ENCODE measurements at regions of chr7 and their contacts with region 1.

Region 1: DNA sequence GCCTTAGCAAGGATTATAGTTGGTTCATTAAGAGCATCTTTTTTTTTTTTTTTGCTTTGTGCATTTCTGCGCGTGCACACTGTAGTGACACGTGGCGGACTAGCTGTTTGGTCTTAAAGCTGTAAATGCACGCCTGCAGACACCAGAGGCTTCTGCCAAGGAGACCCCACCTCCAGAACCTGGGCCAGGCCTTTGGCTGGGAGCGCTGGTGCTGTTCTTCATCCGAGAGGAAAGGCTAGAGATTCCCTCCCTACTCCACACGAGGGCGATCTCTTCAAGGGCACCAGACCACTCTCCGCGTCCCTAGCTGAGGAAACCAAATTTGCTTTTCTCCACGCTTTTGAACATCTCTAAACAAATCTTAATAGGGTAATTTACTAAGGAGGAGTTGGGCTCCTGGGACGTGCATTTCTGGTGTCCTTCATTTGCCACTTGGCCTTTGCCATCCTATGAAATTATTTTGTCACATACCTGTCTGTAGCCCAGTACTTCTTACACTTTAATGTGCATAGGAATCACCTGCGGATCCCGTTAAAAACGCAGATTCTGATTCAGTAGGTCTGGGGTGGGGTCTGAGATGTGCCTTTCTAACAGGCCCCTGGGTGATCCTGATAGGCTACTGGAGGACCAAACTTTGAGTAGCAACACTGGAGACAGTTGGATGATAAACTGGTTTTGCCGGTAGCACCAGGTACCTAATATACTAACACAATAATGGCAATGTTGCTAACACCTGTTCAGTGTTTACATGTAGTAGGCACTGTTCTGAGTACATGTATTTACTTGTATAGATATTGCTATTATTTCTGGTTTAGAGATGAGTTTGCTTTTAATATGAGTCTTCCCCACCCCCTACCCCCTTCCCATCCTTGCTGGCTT is 1.3 kb upstream of the SLC26A5 start:
- DNase-seq: peak; percentile 74
- H3K4me3 Mint-ChIP-seq: no peak overlapping the region
- H3K27ac Mint-ChIP-seq: no peak overlapping the region
- H3K4me1 Mint-ChIP-seq: peaks cover 4% of the 10 kb centered on the region
- H3K27me3 Mint-ChIP-seq: peaks cover 62% of the 10 kb centered on the region

Region 2: DNA sequence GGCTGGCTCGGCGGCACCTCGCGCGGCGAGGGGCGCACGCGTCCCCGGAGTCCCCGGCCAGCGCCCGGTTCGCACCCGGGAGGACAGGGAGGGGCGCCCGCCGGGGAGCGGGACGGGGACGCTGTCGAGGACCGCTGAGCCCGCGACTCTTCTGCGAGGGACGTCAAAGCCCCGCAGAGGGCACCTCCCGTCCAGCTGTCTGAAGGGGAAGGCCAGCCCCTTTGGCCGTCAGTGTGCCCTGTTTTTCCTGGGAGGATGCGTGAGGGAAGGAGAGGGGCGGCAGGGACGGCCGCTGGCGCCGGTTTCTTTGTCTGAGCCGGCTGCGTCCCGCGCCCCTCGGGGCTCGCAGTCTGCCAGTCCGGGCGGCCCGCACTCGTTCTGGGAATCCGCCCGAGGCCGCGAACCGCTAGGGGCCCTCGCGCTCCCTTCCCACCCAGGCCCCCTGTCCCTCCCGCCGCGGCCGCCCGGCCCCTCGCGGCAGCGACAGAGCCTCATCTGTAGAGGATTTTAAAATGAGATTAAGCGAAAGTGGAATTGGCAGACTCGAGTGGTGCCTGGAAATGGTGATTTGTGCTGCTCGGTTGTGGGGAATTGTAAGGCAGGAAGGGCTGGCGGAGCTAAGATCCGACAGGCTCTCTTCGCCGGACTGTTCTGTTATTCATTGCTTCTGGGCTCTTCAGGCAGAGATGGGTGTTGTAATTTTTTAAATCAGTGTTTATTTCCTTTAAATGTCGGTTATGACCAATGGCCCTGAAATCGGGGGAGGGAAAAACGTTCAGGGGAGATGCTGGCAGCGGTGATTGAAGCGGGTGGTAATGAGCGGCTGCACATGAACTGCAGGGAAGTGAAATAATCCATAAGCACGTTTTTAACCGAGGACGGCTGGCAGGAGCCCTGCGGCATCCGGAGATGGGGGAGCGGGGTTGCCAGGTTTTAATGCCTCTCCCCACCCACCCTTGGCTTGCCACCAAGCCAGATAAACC is 542.8 kb after region 1 on chr7:
- intact Hi-C with region 1: loop called (anchors 5 kb)
- DNase-seq: peak; percentile 59
- H3K4me3 Mint-ChIP-seq: peak overlapping the region; percentile 67
- H3K27ac Mint-ChIP-seq: peak overlapping the region; percentile 2
- H3K4me1 Mint-ChIP-seq: peaks cover 6% of the 10 kb centered on the region
- H3K27me3 Mint-ChIP-seq: peaks cover 58% of the 10 kb centered on the region

Measured in activated CD4-positive, alpha-beta T cell treated with anti-CD3 and anti-CD28 coated beads, Interleukin-2, amount 10 ng/mL, durations not matched to agents 24 days and 14 days (primary cell).